Esophagus muscularis mucosa (tissue), 4 donors: ENCODE measurements at regions of chr7 and their contacts with region 1.

Region 1: DNA sequence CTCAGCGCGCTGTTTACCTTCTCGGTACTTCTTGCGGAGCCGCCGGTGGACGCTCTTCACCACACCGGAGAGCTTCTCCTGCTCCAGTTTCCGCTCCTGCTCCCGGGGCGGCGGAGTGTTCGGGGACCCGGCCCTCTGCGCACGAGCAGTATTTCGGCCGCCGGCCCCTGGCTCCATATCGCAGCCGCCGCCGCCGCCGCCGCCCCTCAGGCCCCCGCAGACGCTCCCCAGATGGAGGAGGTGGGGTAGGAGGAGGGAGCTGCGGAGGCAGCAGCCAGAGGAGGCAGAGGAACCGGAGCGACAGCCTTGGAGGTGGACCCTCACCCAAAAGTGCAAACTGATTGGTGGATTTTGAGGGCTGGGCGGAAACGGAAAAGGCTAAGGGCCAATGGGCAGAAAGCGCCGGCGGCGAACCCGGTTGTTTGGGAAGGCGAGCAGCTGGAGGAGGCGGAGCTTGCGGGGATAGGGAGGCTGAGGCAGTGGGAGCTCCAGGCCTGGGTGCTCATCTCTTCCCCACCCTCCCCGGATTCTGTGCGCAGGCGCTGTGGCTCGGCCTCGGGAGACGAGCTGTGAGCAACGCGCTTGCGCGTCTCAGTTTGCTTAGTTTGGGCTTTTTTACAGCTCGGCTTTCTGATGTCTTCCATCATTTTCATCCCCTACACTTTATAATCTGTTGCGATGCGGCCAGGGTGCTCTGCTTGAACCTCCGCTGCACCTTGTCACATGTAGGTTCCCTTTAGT is 146.9 kb downstream of the GPR85 start:
- DNase-seq: peak; percentile 99
- H3K4me3 ChIP-seq: peak overlapping the region; percentile 84 to 93 (median 90)
- H3K27ac ChIP-seq: peak overlapping the region; percentile 81 to 83 (median 82)
- H3K4me1 ChIP-seq: peaks cover 16 to 39% (median 35%) of the 10 kb centered on the region in 4 donors
- H3K27me3 ChIP-seq: no peaks in the 10 kb centered on the region
- CTCF ChIP-seq: no peak
- EP300 ChIP-seq: no peak
- POLR2A ChIP-seq: peak; percentile 19

Region 2: DNA sequence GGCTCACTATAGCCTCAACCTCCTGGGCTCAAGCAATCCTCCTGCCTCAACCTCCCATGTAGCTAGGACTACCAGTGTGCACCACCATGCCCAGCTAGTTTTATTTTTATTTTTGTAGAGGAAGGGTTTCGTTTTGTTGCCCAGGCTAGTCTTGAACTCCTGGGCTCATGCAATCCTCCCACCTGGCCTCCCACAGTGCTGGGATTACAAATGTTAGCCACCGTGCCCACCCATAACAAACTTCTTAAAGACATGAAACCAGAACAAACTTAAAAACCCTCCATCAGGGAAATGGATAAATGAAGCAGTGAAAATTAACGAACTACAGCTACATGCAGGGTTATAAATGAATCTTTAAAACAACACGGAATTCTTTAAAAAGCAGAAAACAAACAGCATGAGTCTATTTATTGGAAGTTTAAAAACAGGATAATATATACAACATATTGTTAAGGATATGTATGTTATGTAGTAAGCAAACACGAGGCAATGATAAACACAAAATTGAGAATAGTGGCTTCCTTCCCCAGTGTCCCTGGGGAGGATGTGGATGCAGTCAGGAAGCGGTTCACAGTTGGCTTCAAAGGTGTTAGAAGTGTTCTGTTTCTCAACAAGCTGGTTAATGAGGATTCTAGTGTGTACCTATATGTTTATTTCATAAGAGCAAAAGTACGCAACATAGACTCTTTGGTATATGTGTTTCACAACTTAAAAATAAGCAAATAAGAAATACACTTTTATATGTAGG is 1249.2 kb before region 1 on chr7:
- intact Hi-C with region 1: no loop called
- DNase-seq: no peak
- H3K4me3 ChIP-seq: no peak overlapping the region
- H3K27ac ChIP-seq: no peak overlapping the region
- H3K4me1 ChIP-seq: no peaks in the 10 kb centered on the region
- H3K27me3 ChIP-seq: no peaks in the 10 kb centered on the region
- CTCF ChIP-seq: no peak
- EP300 ChIP-seq: no peak
- POLR2A ChIP-seq: no peak

Region 3: DNA sequence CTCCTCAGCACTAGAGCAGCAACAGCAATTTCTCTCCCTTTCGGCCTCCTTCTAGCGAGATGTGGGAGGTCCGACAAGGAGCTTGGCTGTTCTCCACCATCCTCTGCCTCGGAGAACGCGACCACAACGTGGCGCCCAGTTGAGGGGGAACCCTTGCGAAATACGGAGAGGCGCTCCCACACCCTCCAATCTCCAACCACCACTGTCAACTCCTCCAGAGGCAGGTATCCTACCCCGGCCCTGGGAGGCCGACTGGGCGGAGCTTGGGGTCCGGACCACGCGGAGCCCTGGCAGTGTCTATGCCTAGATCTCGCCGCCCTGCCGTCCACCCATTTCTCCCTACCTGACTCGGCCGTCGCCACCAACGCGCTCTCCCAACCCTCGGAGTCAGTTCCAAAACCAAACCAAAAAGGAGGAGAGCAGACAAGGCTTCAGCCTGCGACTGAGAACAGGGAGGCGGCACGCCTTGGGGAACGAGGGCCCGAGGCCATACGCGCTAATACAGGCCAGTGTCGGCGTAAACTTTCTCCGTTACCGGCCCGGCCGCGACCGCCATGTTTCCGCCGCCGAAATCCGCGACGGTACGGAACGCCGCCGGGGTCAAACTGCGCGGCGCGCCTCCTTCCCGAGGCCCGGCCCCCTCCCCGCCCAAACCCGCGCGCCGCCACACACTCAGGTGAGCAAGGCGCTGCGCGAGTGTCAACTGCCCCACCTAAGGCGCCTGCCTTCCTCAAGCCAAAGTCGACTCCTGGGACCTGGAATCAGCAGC is 149.7 kb before region 1 on chr7 and contains the start of gene TMEM168:
- intact Hi-C with region 1: loop called (anchors 2 kb)
- DNase-seq: no peak
- H3K4me3 ChIP-seq: peak within 1 kb of the TSS; percentile 67 to 82 (median 78)
- H3K27ac ChIP-seq: peak within 1 kb of the TSS; percentile 78 to 89 (median 86)
- H3K4me1 ChIP-seq: peaks cover 11 to 23% (median 21%) of the 10 kb centered on the region in 4 donors
- H3K27me3 ChIP-seq: no peaks in the 10 kb centered on the region
- CTCF ChIP-seq: no peak
- EP300 ChIP-seq: no peak
- POLR2A ChIP-seq: peak; percentile 17
- total RNA-seq, gene TMEM168: 13.7 to 22.8 (median 16.4) TPM

Region 4: GRCh38 chr7:113118074-113118959 is 178.6 kb after region 1 on chr7 and contains the start of gene SMIM30:
- intact Hi-C with region 1: loop called (anchors 5 kb)
- DNase-seq: peak; percentile 98
- H3K4me3 ChIP-seq: peak within 1 kb of the TSS; percentile 63 to 67 (median 64)
- H3K27ac ChIP-seq: peak within 1 kb of the TSS; percentile 52 to 76 (median 71)
- H3K4me1 ChIP-seq: peaks cover 5 to 16% (median 14%) of the 10 kb centered on the region in 4 donors
- H3K27me3 ChIP-seq: no peaks in the 10 kb centered on the region
- CTCF ChIP-seq: no peak
- EP300 ChIP-seq: no peak
- POLR2A ChIP-seq: peak; percentile 71
- total RNA-seq, gene SMIM30: 25.2 to 37.8 (median 35.2) TPM